Naive thymus-derived CD4-positive, alpha-beta T cell (primary cell): ENCODE measurements at regions of chr9 and their contacts with region 1.

Region 1: GRCh38 chr9:72473474-72474261 is 47.7 kb upstream of the TMC1 start:
- DNase-seq: no peak
- ATAC-seq: peak; percentile 62
- H3K4me3 ChIP-seq: no peak overlapping the region
- H3K4me3 Mint-ChIP-seq: peak overlapping the region in 1 of 10 donors; percentile 62
- H3K27ac ChIP-seq: no peak overlapping the region
- H3K27ac Mint-ChIP-seq: peak overlapping the region in 4 of 9 donors; percentile 63 to 88 (median 78)
- H3K4me1 ChIP-seq: peaks cover 0 to 6% of the 10 kb centered on the region in 2 donors
- H3K4me1 Mint-ChIP-seq: peaks cover 8 to 47% (median 13%) of the 10 kb centered on the region in 7 donors
- H3K27me3 ChIP-seq: no peaks in the 10 kb centered on the region
- H3K27me3 Mint-ChIP-seq: peaks cover 0 to 4% (median 0%) of the 10 kb centered on the region in 5 donors

Region 2: DNA sequence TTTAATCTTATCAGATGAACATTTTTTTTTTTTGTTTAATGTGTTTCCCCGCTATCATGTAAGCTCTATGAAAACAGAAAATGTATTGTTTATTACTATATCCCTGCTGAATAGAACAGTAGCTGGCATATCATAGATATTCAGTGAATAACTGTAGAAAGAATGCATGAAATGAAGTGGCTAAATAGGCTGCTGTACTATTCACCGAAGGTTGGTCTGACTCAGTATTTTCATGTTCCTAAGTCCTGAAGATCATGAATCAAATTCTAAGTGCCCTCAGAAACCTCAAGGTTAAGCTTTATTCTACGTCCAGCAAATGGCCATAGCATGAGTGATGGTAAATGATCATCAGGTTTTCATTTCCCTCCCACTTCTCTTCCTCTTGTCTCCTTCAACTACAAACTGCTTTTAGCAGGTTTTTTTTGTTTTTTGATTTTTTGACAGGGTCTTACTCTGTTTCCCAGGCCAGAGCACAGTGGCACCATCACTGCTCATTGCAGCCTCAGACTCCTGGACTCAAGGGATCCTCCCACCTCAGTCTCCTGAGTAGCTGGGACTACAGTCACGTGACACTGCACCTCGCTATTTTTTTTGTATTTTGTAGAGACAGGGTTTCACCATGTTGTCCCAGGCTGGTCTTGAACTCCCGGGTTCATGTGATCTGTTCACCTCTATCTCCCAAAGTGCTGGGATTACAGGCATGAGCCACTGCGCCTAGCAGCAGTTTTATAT is 89.5 kb before region 1 on chr9:
- CTCF ChIA-PET with region 1: no interaction called
- POLR2A ChIA-PET with region 1: no interaction called
- intact Hi-C with region 1: loop called in 1 of 2 experiments (anchors 5 kb)
- DNase-seq: no peak
- ATAC-seq: no peak
- H3K4me3 ChIP-seq: no peak overlapping the region
- H3K4me3 Mint-ChIP-seq: no peak overlapping the region
- H3K27ac ChIP-seq: no peak overlapping the region
- H3K27ac Mint-ChIP-seq: peak overlapping the region in 1 of 9 donors; percentile 6
- H3K4me1 ChIP-seq: no peaks in the 10 kb centered on the region
- H3K4me1 Mint-ChIP-seq: peaks cover 0 to 15% (median 4%) of the 10 kb centered on the region in 7 donors
- H3K27me3 ChIP-seq: no peaks in the 10 kb centered on the region
- H3K27me3 Mint-ChIP-seq: peaks cover 0 to 4% (median 0%) of the 10 kb centered on the region in 5 donors

Region 3: DNA sequence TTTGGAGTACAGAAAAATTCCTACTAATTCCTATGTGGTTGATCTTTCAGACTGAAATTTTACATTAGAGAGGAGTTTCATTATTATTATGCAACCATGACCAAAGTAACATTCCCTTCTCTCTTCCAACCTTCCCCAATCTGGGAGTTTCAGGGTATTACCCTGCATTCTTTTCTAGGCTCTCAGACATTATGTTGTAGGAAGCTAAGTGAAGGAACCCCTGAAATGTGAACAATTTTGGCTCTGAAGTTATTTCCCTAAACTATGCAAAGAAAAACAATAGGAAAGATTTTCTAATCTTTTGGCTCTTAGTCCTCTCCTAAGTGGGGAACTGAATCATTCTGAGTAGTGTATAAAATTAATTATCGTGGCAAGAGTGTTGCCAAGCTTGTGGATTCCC is 45.3 kb before region 1 on chr9:
- CTCF ChIA-PET with region 1: no interaction called
- POLR2A ChIA-PET with region 1: no interaction called
- intact Hi-C with region 1: loop called in 1 of 2 experiments (anchors 10 kb)
- DNase-seq: no peak
- ATAC-seq: no peak
- H3K4me3 ChIP-seq: no peak overlapping the region
- H3K4me3 Mint-ChIP-seq: no peak overlapping the region
- H3K27ac ChIP-seq: no peak overlapping the region
- H3K27ac Mint-ChIP-seq: no peak overlapping the region
- H3K4me1 ChIP-seq: no peaks in the 10 kb centered on the region
- H3K4me1 Mint-ChIP-seq: no peaks in the 10 kb centered on the region
- H3K27me3 ChIP-seq: peaks cover 0 to 3% of the 10 kb centered on the region in 2 donors
- H3K27me3 Mint-ChIP-seq: peaks cover 0 to 15% (median 4%) of the 10 kb centered on the region in 5 donors

Region 4: GRCh38 chr9:72443855-72444254 is 29.8 kb before region 1 on chr9:
- CTCF ChIA-PET with region 1: no interaction called
- POLR2A ChIA-PET with region 1: no interaction called
- intact Hi-C with region 1: loop called in 1 of 2 experiments (anchors 1 kb)
- DNase-seq: no peak
- ATAC-seq: peak; percentile 80
- H3K4me3 ChIP-seq: no peak overlapping the region
- H3K4me3 Mint-ChIP-seq: peak overlapping the region in 2 of 10 donors; percentile 45 to 58
- H3K27ac ChIP-seq: no peak overlapping the region
- H3K27ac Mint-ChIP-seq: peak overlapping the region in 3 of 9 donors; percentile 28 to 80 (median 61)
- H3K4me1 ChIP-seq: peaks cover 0 to 11% of the 10 kb centered on the region in 2 donors
- H3K4me1 Mint-ChIP-seq: peaks cover 4 to 44% (median 14%) of the 10 kb centered on the region in 7 donors
- H3K27me3 ChIP-seq: no peaks in the 10 kb centered on the region
- H3K27me3 Mint-ChIP-seq: peaks cover 0 to 2% (median 0%) of the 10 kb centered on the region in 5 donors

Region 5: DNA sequence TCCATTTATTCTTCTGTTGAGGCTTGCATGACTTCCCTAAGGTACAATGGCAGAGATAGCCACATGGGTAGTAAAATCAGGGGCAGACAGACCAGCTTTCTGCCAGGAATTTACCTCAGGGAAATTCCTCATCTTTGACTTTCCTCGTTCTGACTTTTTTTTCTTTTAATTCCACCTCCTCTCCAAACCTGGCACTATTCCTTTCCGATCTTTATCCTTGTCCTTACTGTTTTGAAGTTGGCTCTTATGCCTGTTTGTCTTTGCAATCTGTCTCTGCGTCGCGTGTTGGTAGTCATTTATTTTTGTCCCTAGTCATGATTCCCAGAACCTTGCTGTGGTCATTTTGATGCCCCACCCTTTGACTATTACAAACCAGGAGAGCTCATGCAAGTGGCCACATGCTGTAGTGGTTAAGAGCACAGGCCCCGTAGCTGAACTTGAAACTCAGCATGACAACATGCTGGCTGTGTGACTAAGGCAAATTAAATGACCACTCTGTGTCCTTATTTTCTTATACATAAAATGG is 66.7 kb after region 1 on chr9:
- CTCF ChIA-PET with region 1: no interaction called
- POLR2A ChIA-PET with region 1: no interaction called
- intact Hi-C with region 1: no loop called
- DNase-seq: no peak
- ATAC-seq: no peak
- H3K4me3 ChIP-seq: no peak overlapping the region
- H3K4me3 Mint-ChIP-seq: no peak overlapping the region
- H3K27ac ChIP-seq: no peak overlapping the region
- H3K27ac Mint-ChIP-seq: no peak overlapping the region
- H3K4me1 ChIP-seq: no peaks in the 10 kb centered on the region
- H3K4me1 Mint-ChIP-seq: peaks cover 0 to 31% (median 0%) of the 10 kb centered on the region in 7 donors
- H3K27me3 ChIP-seq: no peaks in the 10 kb centered on the region
- H3K27me3 Mint-ChIP-seq: no peaks in the 10 kb centered on the region